Natural killer cell (primary cell): ENCODE measurements at regions of chr11 and their contacts with region 1.

Region 1: DNA sequence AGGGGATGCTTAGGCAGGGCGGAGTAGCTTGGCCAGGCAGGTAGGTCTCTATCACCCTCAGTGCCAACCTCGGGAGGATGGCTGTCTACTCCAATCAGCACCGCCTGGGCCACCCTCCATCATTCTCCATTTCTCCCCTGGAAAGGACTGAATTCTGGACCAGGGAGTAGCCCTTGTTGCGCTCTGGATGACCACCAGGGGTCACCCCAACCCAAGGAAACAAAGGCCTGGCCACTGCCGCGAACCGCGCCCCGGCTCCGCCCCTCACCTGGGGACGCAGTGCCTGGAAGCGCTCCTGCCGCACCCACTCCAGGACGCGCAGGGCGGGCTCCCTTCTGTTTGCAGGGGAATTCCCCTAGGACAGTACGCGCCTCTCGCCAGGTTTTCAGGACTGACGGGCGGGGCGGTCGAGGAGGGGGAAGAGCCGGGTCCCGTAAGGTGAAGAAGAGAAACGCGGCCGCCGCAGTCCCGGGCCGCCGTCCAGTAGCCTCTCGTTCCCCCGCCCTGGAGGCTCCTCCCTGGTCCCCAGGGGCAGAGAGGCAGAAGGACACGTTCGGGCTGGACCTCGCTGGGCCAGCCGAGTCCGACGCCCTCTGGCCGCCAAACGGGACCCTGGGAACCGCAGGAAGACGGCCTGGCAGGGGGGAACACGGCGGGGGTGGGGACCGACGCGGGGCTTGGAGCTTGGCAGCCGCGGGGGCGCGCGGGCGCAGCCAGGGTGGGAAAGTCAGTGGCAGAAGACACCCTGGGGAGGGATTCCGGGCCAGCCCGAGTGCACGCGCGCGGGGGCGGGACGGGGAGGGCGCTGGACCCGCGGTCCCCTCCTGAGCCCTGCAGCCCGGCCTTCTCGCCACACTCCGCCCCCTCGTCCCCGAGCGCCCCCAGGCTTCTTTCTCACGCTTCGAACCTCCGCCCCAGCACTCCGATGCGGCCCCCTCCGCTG is 7.1 kb downstream of the SCN4B start:
- DNase-seq: peak; percentile 69 to 93
- ATAC-seq: peak; percentile 88 to 95 (median 94)
- H3K4me3 ChIP-seq: peak overlapping the region; percentile 63
- H3K4me3 Mint-ChIP-seq: peak overlapping the region; percentile 82
- H3K27ac ChIP-seq: no peak overlapping the region
- H3K27ac Mint-ChIP-seq: no peak overlapping the region
- H3K4me1 ChIP-seq: peaks cover 10% of the 10 kb centered on the region
- H3K4me1 Mint-ChIP-seq: peaks cover 0 to 4% of the 10 kb centered on the region in 2 donors
- H3K27me3 ChIP-seq: peaks cover 2% of the 10 kb centered on the region
- H3K27me3 Mint-ChIP-seq: peaks cover 47 to 72% of the 10 kb centered on the region in 2 donors
- CTCF ChIP-seq: peak; percentile 89

Region 2: DNA sequence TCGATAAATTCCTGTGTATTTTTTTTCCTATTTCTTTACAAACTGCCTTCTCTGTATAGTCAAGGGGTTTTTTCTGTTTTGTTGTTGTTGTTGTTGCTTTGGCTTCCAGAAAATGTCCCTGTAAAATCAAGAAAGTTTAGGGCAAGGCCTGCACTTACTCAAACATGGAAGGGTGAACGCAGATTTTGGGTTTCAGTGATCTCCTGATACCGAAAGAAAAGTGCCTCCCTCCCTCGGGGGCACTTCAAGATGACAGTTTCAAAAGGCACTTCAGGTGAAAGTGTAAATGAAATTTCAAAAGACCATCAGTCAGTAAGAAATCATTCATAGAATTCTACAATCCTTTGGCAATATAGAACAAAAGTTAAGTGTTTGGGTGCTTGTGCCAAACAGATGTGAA is 112.1 kb before region 1 on chr11:
- intact Hi-C with region 1: no loop called
- DNase-seq: no peak
- ATAC-seq: no peak
- H3K4me3 ChIP-seq: no peak overlapping the region
- H3K4me3 Mint-ChIP-seq: no peak overlapping the region
- H3K27ac ChIP-seq: no peak overlapping the region
- H3K27ac Mint-ChIP-seq: no peak overlapping the region
- H3K4me1 ChIP-seq: peaks cover 7% of the 10 kb centered on the region
- H3K4me1 Mint-ChIP-seq: peaks cover 22 to 30% of the 10 kb centered on the region in 2 donors
- H3K27me3 ChIP-seq: no peaks in the 10 kb centered on the region
- H3K27me3 Mint-ChIP-seq: no peaks in the 10 kb centered on the region
- CTCF ChIP-seq: no peak

Region 3: GRCh38 chr11:118060869-118061268 is 84.7 kb before region 1 on chr11:
- intact Hi-C with region 1: no loop called
- DNase-seq: no peak
- ATAC-seq: no peak
- H3K4me3 ChIP-seq: no peak overlapping the region
- H3K4me3 Mint-ChIP-seq: no peak overlapping the region
- H3K27ac ChIP-seq: no peak overlapping the region
- H3K27ac Mint-ChIP-seq: no peak overlapping the region
- H3K4me1 ChIP-seq: peaks cover 4% of the 10 kb centered on the region
- H3K4me1 Mint-ChIP-seq: peaks cover 8 to 24% of the 10 kb centered on the region in 2 donors
- H3K27me3 ChIP-seq: no peaks in the 10 kb centered on the region
- H3K27me3 Mint-ChIP-seq: peaks cover 15 to 19% of the 10 kb centered on the region in 2 donors
- CTCF ChIP-seq: no peak

Region 4: GRCh38 chr11:118290923-118291322 is 145.4 kb after region 1 on chr11:
- intact Hi-C with region 1: loop called (anchors 1 kb)
- DNase-seq: peak in 1 of 2 donors; percentile 77
- ATAC-seq: peak; percentile 50 to 84 (median 68)
- H3K4me3 ChIP-seq: no peak overlapping the region
- H3K4me3 Mint-ChIP-seq: no peak overlapping the region
- H3K27ac ChIP-seq: no peak overlapping the region
- H3K27ac Mint-ChIP-seq: peak overlapping the region in 1 of 2 donors; percentile 28
- H3K4me1 ChIP-seq: peaks cover 6% of the 10 kb centered on the region
- H3K4me1 Mint-ChIP-seq: peaks cover 14 to 16% of the 10 kb centered on the region in 2 donors
- H3K27me3 ChIP-seq: no peaks in the 10 kb centered on the region
- H3K27me3 Mint-ChIP-seq: peaks cover 6 to 11% of the 10 kb centered on the region in 2 donors
- CTCF ChIP-seq: peak; percentile 48